ENCODE measurements at regions of chr3 and their contacts with region 1.

Region 1: DNA sequence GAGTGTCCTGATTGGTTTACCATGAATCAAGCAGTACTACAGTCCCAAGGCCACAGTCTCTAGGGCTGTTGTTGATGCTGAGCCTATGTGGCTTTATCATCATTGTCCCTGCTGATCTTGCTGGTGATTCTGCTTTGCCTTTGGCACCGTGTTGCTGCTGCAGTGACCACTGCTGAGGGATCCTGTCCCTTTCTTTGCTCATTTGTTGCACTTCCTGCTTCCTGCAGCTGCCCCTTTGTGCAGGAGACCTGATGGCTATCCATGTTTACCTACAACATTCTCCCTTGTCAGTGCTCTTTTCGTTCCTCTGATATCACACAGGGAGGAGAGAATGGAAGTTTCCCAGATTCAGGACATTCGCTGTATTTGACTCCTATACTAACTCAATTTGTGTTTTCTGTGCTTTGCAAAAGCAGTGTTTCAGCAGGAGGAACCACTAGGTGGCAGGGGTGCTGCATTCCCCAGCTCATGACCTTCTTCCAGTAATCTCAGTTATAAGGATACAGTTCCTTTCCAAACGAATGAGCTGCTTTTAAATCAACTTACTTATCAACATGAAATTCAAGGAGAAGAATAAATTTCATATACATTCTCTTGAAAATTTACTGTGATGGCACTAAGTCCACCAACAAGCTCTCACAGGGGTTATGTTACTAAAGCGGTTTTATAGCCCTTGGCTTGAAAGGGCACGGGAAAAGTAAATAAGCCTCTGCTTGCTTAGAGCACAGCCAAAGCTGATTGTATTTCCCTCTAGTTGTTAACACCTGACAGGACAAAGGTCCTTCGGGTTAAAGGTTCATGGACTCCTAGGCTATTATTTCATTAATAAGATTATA is 9.7 kb upstream of the THUMPD3 start:
- DNase-seq: peak; percentile 80
- H3K4me3 ChIP-seq: no peak overlapping the region
- H3K27ac ChIP-seq: no peak overlapping the region
- H3K4me1 ChIP-seq: peaks cover 0 to 9% (median 4%) of the 10 kb centered on the region in 4 donors
- H3K27me3 ChIP-seq: no peaks in the 10 kb centered on the region
- CTCF ChIP-seq: peak; percentile 68 to 85 (median 78)
- EP300 ChIP-seq: no peak
- POLR2A ChIP-seq: no peak

Region 2: GRCh38 chr3:9238721-9239295 is 114.3 kb before region 1 on chr3:
- intact Hi-C with region 1: no loop called
- DNase-seq: no peak
- H3K4me3 ChIP-seq: no peak overlapping the region
- H3K27ac ChIP-seq: no peak overlapping the region
- H3K4me1 ChIP-seq: no peaks in the 10 kb centered on the region
- H3K27me3 ChIP-seq: no peaks in the 10 kb centered on the region
- CTCF ChIP-seq: no peak
- EP300 ChIP-seq: no peak
- POLR2A ChIP-seq: no peak

Region 3: DNA sequence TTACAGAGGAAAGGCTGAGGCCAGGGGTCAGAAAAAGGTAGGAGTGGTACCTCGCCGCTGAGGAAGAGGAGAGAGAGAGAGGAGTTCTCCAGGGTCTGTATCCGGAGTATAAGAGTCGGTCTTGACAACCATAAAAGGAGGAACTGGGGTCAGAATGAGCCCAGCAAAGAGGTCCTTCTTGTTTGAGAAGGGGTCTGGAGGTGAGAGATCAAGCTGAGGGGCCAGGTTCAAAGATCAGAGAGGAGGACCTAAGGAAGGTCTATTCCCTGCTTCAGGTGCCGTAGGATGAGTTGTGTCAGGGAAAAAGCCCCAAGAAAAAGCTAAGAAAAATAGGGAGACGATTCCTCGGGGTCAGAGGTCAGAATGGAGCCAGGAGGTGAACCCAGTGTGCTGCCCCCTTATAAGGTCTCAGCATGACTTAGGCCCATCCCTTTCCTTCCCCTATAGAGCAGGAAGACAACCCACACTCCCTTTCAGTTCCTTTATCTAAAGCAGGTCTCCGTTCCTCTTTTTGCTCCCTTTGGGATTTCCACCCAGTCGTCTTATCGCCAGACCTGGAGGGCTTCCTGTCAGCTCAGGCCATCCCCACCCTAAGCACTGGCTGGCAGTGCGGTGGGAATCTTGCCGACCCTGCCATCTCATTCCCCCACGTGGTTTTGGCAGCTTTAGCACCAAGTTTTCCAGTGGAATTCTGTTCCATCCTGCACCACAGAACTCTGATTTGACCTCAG is 296.8 kb after region 1 on chr3:
- intact Hi-C with region 1: loop called (anchors 5 kb)
- DNase-seq: no peak
- H3K4me3 ChIP-seq: peak overlapping the region; percentile 98 to 100 (median 99)
- H3K27ac ChIP-seq: peak overlapping the region; percentile 83 to 87 (median 86)
- H3K4me1 ChIP-seq: peaks cover 0 to 23% (median 16%) of the 10 kb centered on the region in 4 donors
- H3K27me3 ChIP-seq: no peaks in the 10 kb centered on the region
- CTCF ChIP-seq: no peak
- EP300 ChIP-seq: no peak
- POLR2A ChIP-seq: no peak

Region 4: GRCh38 chr3:10546181-10546624 is 1193.1 kb after region 1 on chr3:
- intact Hi-C with region 1: no loop called
- DNase-seq: no peak
- H3K4me3 ChIP-seq: no peak overlapping the region
- H3K27ac ChIP-seq: no peak overlapping the region
- H3K4me1 ChIP-seq: no peaks in the 10 kb centered on the region
- H3K27me3 ChIP-seq: peaks cover 0 to 5% (median 0%) of the 10 kb centered on the region in 3 donors
- CTCF ChIP-seq: no peak
- EP300 ChIP-seq: no peak
- POLR2A ChIP-seq: no peak